Activated T-helper 1 cell treated with anti-CD3 and anti-CD28 coated beads, Interleukin-12 subunit alpha, Interleukin-12 subunit beta, Interleukin-2, Interleukin-4 antibody, amounts not matched to agents 30 ng/mL and 10 ng/mL and 1 ng/mL, durations not matched to agents 14 hours and 24 hours and 36 hours (primary cell): ENCODE measurements at regions of chr3 and their contacts with region 1.

Region 1: DNA sequence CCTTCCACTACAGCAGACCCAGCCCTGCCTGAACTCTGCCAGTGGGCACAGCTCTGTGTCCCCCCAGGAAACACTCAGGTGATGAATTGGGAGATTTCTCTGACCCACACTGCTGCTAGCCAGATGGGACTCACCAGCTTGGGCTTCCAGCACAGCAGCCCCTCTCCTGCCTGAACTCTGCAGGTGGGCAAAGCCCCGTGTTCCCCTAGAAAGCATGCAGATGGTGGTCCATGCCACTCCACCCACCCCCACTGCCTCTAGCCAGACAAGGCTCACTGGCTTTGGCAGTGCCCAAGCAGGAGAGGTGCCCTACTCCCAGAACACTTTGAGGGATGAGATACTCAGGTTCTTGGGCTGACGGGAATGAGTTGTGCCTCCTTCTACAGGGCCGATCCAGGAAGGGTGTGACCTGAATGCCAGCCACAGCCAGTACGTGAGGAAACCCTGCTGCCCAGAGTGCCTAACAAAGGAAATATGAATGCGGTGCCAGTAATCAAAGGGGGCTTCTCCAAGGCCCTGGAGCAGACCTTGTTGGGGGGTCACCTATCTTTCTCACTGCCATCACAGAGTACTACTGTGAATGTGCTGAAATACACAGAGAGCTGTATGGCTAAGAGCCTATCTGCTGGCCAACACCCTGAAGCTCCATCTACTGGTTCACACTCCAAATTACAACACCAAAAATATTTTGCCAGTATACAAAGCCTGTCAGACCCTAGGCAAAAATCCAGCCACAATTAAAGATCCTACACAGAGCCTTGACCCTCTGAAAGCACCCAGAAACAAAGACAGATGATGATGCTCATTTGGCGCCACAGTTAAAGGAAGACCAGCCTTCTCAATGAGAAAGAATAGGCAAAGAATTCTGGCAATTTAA is 61.9 kb downstream of the BTLA start:
- DNase-seq: peak; percentile 30
- H3K4me3 Mint-ChIP-seq: no peak overlapping the region
- H3K27ac Mint-ChIP-seq: peak overlapping the region; percentile 75
- H3K4me1 Mint-ChIP-seq: peaks cover 67% of the 10 kb centered on the region
- H3K27me3 Mint-ChIP-seq: no peaks in the 10 kb centered on the region

Region 2: DNA sequence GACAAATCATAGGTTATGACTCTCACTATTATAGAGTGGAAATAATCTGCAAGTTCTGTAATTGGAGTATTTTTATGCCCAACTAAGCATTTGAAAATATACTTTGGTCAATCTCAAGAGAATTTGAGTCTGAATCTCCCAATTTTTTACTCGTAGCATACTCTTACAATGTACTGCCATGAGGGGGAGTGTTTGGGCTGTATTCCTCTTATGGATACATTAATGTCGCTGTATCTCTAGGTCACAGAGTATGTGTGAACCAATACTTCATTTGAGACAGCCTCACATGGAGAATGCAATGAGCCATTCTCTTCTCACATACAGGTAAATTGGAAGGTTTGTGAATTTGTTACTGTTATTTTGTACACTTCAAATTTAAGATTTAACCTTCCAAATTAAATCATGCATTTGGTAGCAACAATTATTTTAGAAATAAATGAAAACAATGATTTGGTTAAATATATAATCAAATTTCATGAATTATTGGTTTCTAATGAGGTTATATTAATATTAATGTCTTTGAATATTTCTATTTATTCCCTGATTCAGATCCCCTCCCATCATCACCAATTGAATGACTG is 109.9 kb before region 1 on chr3:
- intact Hi-C with region 1: loop called (anchors 1 kb)
- DNase-seq: peak; percentile 38
- H3K4me3 Mint-ChIP-seq: no peak overlapping the region
- H3K27ac Mint-ChIP-seq: no peak overlapping the region
- H3K4me1 Mint-ChIP-seq: no peaks in the 10 kb centered on the region
- H3K27me3 Mint-ChIP-seq: peaks cover 1% of the 10 kb centered on the region

Region 3: DNA sequence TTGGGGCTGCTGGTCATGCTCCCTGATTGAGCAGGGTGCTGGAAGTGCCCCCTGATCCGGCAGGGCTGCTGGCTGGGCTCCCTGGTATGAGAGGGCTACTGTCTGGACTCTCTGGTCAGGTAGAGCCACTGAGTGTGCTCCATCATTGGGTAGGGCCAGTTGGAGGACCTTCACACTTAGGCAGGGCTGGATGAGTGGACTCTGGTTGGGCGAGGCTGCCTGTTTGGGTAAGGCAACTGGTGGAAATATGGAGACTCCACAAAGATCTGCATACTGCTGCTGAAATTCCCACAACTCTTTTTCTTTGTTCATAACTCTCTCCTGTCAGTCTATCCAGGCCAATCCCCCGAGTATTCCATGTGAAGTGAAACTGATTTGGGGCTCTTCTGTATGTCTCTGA is 23.7 kb before region 1 on chr3:
- intact Hi-C with region 1: loop called (anchors 2 kb)
- DNase-seq: no peak
- H3K4me3 Mint-ChIP-seq: no peak overlapping the region
- H3K27ac Mint-ChIP-seq: no peak overlapping the region
- H3K4me1 Mint-ChIP-seq: peaks cover 10% of the 10 kb centered on the region
- H3K27me3 Mint-ChIP-seq: peaks cover 3% of the 10 kb centered on the region